ENCODE measurements at regions of chr1 and their contacts with region 1.

Region 1: GRCh38 chr1:28886731-28887418 is 27.5 kb upstream of the EPB41 start:
- DNase-seq: peak; percentile 89 to 94
- ATAC-seq: peak; percentile 89
- H3K4me3 ChIP-seq: peak overlapping the region; percentile 88 to 93
- H3K27ac ChIP-seq: no peak overlapping the region
- H3K4me1 ChIP-seq: peaks cover 0 to 2% of the 10 kb centered on the region in 2 donors
- H3K27me3 ChIP-seq: no peaks in the 10 kb centered on the region

Region 2: DNA sequence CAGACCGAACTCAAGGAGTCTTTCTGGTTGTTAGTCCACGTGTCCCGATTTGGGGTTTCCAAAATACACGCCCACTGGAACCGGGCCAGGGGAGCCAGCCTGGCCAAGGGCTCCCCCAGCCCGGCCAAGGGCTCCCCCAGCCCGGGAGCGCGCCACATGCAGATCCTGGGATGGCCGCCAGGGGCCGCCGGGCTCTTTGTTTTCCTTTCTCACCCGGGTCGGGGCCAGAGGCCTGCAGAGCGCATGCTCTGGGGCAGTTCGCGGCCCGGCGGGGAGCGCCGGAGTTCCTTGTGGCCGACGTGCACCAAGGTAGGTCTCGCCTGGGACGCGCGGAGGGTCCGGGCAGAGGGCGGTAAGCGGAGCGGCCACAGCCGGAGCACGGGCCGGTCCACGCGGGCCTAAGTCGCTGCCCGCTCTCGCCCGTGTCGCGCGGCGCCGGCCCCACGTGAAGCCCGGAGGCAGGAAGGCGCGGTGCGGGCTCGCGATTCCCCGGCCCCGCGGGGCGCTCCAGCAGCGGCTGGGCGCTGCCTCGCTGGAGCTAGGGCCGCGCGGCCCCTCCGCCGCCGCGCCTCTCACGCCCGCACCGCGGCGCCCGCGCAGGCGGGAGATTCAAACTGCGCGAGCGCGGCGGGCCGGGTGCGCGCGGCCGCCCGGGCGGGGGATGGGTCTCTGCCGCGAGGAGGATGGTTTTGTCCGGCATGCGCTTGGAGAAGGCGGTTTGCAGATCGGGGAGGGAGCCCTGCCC is 368.7 kb before region 1 on chr1:
- intact Hi-C with region 1: loop called in 1 of 2 experiments (anchors 10 kb)
- DNase-seq: peak; percentile 92 to 97
- ATAC-seq: peak; percentile 97
- H3K4me3 ChIP-seq: peak overlapping the region; percentile 20 to 38
- H3K27ac ChIP-seq: peak overlapping the region in 1 of 2 donors; percentile 25
- H3K4me1 ChIP-seq: no peaks in the 10 kb centered on the region
- H3K27me3 ChIP-seq: no peaks in the 10 kb centered on the region

Region 3: DNA sequence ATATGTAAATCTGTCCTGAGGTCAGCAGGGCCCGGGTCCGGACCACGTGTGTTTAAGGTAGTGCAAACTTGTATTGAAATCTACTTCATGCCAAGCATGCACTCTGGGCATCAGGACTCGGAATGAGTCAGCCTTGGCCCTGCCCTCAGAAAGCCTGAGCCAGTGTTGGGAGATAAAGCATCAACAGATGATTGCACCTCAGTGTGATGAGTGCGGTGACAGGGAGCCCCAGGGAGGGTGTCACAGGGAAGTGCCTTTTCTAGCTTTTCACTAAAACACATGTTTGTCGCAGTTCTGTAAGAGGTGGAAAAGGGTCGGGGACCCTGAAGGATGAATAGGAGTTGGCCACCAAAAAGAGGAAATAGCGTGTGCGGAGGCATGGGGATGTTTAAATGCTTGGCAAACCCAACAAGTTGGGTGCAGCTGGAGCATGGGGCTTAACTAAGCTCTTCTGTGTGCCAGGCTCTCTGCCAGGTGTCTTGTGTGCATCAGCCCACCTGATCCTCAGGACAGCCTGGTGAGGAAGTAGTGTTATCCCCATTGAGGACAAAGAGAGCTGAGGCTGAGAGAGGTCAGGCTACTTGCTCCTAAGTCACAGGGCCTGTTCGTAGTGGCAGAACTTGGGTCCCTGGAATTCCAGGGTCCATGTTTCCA is 20.8 kb before region 1 on chr1:
- intact Hi-C with region 1: no loop called
- DNase-seq: no peak
- ATAC-seq: no peak
- H3K4me3 ChIP-seq: no peak overlapping the region
- H3K27ac ChIP-seq: no peak overlapping the region
- H3K4me1 ChIP-seq: no peaks in the 10 kb centered on the region
- H3K27me3 ChIP-seq: no peaks in the 10 kb centered on the region

Region 4: DNA sequence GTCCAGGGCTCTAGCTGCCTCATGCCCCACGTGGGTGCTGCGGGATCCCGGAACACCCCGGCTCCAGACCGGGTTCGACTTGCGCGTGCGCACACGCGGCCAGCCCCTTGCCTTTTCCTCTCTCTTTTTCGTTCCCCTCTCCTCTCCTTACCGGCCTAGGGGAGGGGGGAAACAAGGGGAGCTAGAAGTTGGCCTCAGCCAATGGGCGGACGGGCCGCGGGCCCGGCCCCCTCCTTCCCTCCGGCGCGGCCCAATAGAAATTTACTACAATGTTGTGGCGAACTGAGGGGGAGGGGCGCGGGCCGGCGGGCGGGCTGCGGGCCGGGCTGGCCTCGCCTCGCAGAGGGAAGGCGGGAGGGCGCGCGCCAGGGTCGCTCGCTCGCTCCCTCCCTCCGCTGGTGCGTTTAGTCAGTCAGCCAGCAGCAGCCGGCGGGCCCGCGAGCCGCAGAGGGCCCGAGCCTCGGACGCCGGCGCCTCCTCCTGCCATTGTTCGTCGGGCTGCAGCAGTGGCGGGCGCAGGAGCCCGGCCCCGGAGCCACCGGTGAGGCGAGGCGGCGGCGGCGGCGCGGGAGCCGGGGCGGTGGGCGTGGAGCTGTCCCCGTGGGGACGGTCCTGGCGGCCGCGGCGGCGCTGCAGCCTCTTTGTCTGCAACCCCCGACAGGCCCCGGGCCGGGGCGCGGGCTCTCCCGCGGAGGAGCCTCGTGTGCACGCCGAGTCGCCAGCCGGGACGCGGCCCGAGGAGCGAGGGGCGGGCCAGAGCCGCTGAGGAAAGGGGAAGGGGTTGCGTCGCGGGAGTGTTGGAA is 27.6 kb after region 1 on chr1 and contains the start of gene EPB41:
- intact Hi-C with region 1: loop called in 1 of 2 experiments (anchors 2 kb)
- DNase-seq: peak; percentile 94 to 96
- ATAC-seq: peak; percentile 96
- H3K4me3 ChIP-seq: peak within 1 kb of the TSS; percentile 59 to 65
- H3K27ac ChIP-seq: peak within 1 kb of the TSS in 1 of 2 donors; percentile 26
- H3K4me1 ChIP-seq: no peaks in the 10 kb centered on the region
- H3K27me3 ChIP-seq: no peaks in the 10 kb centered on the region
- total RNA-seq, gene EPB41: 23.9 to 35.2 TPM

Region 5: DNA sequence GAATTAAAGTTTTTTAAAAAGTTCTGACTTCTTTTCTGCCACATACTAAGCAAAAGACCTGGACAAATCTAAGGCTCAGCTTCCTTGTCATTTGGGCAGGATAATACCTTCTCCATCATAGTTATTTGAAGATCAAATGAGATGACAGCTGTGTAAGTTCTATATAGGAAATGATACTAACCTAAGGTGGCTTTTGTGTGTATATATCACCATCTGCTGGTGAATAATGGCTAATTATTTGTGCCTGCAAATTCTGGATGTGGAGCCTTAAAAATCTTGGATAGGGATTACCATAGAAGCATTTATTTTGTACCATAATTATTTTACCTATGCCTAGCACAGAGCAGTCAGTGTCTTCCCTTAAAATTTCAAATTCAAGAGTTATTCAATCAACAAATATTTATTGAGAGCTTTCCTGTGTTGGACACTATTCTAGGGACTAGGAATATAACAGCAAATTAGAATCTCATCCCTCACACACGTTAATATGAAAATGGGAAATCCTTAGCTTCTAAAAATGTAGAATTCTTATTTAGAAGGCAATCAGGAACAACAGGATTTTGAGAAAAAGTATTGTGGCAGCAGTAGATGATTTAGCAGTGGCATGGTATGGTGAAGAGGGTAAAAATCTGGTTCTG is 147.1 kb after region 1 on chr1:
- intact Hi-C with region 1: loop called (anchors 1 to 2 kb)
- DNase-seq: no peak
- ATAC-seq: no peak
- H3K4me3 ChIP-seq: no peak overlapping the region
- H3K27ac ChIP-seq: no peak overlapping the region
- H3K4me1 ChIP-seq: no peaks in the 10 kb centered on the region
- H3K27me3 ChIP-seq: no peaks in the 10 kb centered on the region

Region 6: DNA sequence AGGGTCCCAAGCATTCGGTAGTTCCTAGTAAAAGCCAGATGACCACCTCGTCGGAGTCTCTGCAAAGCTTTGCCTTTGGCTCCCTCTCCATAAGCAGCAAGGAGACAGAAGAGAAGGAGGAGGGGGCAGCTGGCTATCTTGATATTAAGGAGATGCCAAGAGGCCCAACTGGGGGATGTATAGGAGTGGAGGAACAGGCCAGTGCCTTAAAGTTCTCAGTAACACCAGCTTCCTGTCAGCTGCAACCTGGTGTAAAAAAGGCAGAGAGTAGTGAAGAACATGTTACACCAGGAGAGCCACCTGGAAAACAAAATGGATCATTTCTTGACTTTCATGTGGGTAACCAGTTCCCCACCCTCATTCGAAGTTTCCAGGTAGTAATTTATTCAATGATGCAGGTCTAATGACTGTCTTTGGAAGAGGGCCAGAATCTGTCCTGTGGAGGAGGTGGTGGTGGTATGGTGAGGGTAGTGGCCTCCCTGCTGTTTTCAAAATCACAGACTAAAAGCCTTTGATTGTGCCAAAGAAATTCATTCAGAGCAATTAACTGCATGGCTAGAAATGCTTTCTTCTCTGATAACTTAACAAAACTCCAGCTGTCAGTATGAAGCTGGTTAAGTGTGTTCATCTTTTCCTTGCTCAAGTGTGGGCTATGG is 209.5 kb after region 1 on chr1:
- intact Hi-C with region 1: no loop called
- DNase-seq: no peak
- ATAC-seq: no peak
- H3K4me3 ChIP-seq: no peak overlapping the region
- H3K27ac ChIP-seq: no peak overlapping the region
- H3K4me1 ChIP-seq: no peaks in the 10 kb centered on the region
- H3K27me3 ChIP-seq: no peaks in the 10 kb centered on the region

Region 7: GRCh38 chr1:29124366-29125236 is 237.7 kb after region 1 on chr1:
- intact Hi-C with region 1: loop called in 1 of 2 experiments (anchors 5 kb)
- DNase-seq: peak; percentile 89 to 96
- ATAC-seq: peak; percentile 89
- H3K4me3 ChIP-seq: peak overlapping the region; percentile 56 to 61
- H3K27ac ChIP-seq: peak overlapping the region; percentile 89 to 99
- H3K4me1 ChIP-seq: no peaks in the 10 kb centered on the region
- H3K27me3 ChIP-seq: no peaks in the 10 kb centered on the region